Caco-2 (cell line): ENCODE measurements at regions of chr1 and their contacts with region 1.

Region 1: GRCh38 chr1:207240325-207241095 is 81.0 kb upstream of the CD55 start:
- DNase-seq: peak; percentile 61 to 67
- H3K4me3 ChIP-seq: no peak overlapping the region; the same call in 1 of the 2 replicates
- H3K4me3 Mint-ChIP-seq: peak overlapping the region; percentile 68
- H3K27ac Mint-ChIP-seq: peak overlapping the region; percentile 98
- H3K4me1 ChIP-seq: peaks cover 62% of the 10 kb centered on the region
- H3K4me1 Mint-ChIP-seq: peaks cover 59% of the 10 kb centered on the region
- H3K27me3 ChIP-seq: no peaks in the 10 kb centered on the region
- H3K27me3 Mint-ChIP-seq: no peaks in the 10 kb centered on the region
- CTCF ChIP-seq: no peak

Region 2: GRCh38 chr1:207268337-207268736 is 27.8 kb after region 1 on chr1:
- CTCF ChIA-PET with region 1: no interaction called
- POLR2A ChIA-PET with region 1: no interaction called
- intact Hi-C with region 1: no loop called
- DNase-seq: no peak
- H3K4me3 ChIP-seq: no peak overlapping the region
- H3K4me3 Mint-ChIP-seq: no peak overlapping the region
- H3K27ac Mint-ChIP-seq: no peak overlapping the region
- H3K4me1 ChIP-seq: peaks cover 11% of the 10 kb centered on the region
- H3K4me1 Mint-ChIP-seq: peaks cover 11% of the 10 kb centered on the region
- H3K27me3 ChIP-seq: no peaks in the 10 kb centered on the region
- H3K27me3 Mint-ChIP-seq: no peaks in the 10 kb centered on the region
- CTCF ChIP-seq: no peak

Region 3: GRCh38 chr1:207321079-207321789 is 80.7 kb after region 1 on chr1 and contains the start of gene CD55:
- CTCF ChIA-PET with region 1: interaction called, 7 read pairs
- POLR2A ChIA-PET with region 1: interaction called, 18 read pairs
- intact Hi-C with region 1: loop called (anchors 1 kb)
- DNase-seq: peak; percentile 99
- H3K4me3 ChIP-seq: peak within 1 kb of the TSS; percentile 80
- H3K4me3 Mint-ChIP-seq: peak within 1 kb of the TSS; percentile 83
- H3K27ac Mint-ChIP-seq: peak within 1 kb of the TSS; percentile 95
- H3K4me1 ChIP-seq: peaks cover 39% of the 10 kb centered on the region
- H3K4me1 Mint-ChIP-seq: peaks cover 17% of the 10 kb centered on the region
- H3K27me3 ChIP-seq: no peaks in the 10 kb centered on the region
- H3K27me3 Mint-ChIP-seq: no peaks in the 10 kb centered on the region
- CTCF ChIP-seq: peak; percentile 34 to 41
- total RNA-seq, gene CD55: 195 and 197 TPM in 2 replicates

Region 4: DNA sequence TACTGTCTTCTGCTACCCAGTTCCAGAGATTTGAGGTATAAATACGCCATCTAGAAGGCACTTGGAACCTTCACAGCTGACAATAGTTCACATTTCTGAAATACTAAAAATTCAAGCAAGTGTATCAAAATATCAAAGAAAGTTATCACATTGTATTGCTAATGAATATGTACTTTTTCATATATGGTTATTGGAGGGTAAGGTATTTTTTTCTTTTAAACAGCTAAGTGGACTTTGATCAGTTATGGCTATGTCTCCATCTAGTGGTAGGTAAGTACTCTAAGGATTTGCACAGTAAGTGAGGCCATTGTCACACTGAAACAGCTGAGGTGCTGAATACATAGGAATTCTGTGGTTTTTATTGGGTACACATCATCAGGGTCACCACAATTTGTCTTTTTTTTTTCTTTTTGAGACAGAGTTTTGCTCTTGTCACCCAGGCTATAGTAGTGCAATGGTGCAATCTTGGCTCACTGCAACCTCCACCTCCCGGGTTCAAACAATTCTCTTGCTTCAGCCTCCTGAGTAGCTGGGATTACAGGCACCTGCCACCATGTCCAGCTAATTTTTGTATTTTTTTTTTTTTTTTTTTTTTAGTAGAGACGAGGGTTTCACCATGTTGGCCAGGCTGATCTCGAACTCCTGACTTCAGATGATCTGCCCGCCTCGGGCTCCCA is 164.5 kb after region 1 on chr1:
- CTCF ChIA-PET with region 1: no interaction called
- POLR2A ChIA-PET with region 1: no interaction called
- intact Hi-C with region 1: loop called (anchors 10 kb)
- DNase-seq: peak in 1 of 2 experiments; percentile 35
- H3K4me3 ChIP-seq: no peak overlapping the region
- H3K4me3 Mint-ChIP-seq: no peak overlapping the region
- H3K27ac Mint-ChIP-seq: no peak overlapping the region
- H3K4me1 ChIP-seq: 0 out of 2 replicates have a peak, but pooled peaks cover 4% of the 10 kb centered on the region
- H3K4me1 Mint-ChIP-seq: no peaks in the 10 kb centered on the region
- H3K27me3 ChIP-seq: no peaks in the 10 kb centered on the region
- H3K27me3 Mint-ChIP-seq: no peaks in the 10 kb centered on the region
- CTCF ChIP-seq: peak; percentile 58 to 76